Naive thymus-derived CD8-positive, alpha-beta T cell (primary cell): ENCODE measurements at regions of chr2 and their contacts with region 1.

Region 1: GRCh38 chr2:201071479-201072200 is at the starts of genes HYCC2 and NDUFB3:
- DNase-seq: peak; percentile 84 to 97 (median 94)
- ATAC-seq: peak; percentile 93 to 94
- H3K4me3 Mint-ChIP-seq: peak within 1 kb of the TSS; percentile 93 to 99 (median 96)
- H3K27ac Mint-ChIP-seq: peak within 1 kb of the TSS; percentile 94 to 99 (median 98)
- H3K4me1 Mint-ChIP-seq: peaks cover 25 to 58% (median 50%) of the 10 kb centered on the region in 4 donors
- H3K27me3 Mint-ChIP-seq: peaks cover 0 to 2% (median 0%) of the 10 kb centered on the region in 5 donors
- polyA plus RNA-seq, gene HYCC2: 20.8 to 32.5 (median 23.0) TPM
- polyA plus RNA-seq, gene NDUFB3: 279 to 299 (median 298) TPM

Region 2: DNA sequence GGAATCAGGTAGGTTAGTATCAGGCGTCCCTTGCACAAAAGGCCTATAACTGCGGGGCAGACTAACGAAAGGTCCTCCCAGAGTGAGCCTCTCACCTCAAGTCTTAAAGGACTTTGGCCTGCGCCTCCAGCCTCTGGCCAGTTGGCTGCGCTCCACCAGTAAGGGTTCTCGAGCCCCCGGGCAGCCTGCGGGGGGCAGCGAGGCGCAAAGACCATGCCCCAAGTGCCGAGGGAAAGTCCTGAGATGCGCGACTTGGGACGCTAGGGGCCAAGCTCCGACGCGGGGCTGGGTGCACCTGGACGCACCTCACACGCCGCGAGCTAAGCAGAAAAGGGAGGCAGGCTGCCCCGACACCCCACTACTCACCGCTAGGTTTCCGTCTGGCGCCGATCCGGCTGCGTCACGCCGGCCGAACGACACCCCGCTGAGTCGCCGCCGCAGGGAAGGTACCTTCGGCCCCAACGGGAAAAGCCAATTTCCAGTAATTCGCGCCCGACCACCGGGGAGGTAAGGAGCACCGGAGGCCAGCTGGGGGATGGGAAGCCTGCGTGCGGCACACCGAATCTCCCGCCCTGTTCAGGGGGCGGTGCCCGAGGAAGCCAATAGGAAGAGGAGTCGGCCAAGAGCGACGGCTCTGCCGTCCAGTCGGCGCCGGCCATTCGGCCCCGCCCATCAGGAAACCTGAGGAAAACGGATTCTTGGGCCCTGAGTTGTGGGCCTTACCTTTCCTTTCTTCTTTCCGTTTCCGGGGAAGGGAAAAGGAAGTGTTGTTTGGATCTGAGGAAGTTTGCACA is 108.3 kb before region 1 on chr2 and contains the start of gene ORC2:
- POLR2A ChIA-PET with region 1: interaction called, 19 read pairs
- DNase-seq: peak; percentile 85 to 99 (median 92)
- ATAC-seq: peak; percentile 93 to 94
- H3K4me3 Mint-ChIP-seq: peak within 1 kb of the TSS; percentile 95 to 99 (median 98)
- H3K27ac Mint-ChIP-seq: peak within 1 kb of the TSS; percentile 95 to 100 (median 99)
- H3K4me1 Mint-ChIP-seq: peaks cover 35 to 67% (median 60%) of the 10 kb centered on the region in 4 donors
- H3K27me3 Mint-ChIP-seq: no peaks in the 10 kb centered on the region
- polyA plus RNA-seq, gene ORC2: 9.4 to 11.1 (median 9.4) TPM

Region 3: DNA sequence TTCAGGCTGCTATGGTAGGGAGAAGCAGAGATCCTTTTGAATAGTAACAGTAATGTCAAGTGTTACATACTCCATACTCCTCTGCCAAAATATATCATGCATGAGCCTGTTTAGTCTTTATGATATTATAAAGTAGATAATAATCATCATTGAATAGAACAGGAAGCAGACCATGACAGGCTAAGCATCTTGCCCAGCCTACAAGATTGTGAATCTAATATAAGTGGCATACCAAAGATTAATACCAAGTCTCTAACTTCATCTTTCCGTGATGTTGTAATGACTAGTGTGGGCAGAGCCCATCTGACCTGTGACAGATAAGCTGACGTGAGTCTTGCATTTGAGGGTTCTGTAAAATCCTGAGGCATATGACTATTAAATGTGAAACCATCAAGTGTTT is 13.2 kb after region 1 on chr2:
- POLR2A ChIA-PET with region 1: interaction called, 12 read pairs
- DNase-seq: no peak
- ATAC-seq: no peak
- H3K4me3 Mint-ChIP-seq: no peak overlapping the region
- H3K27ac Mint-ChIP-seq: peak overlapping the region in 6 of 10 donors; percentile 1 to 61 (median 32)
- H3K4me1 Mint-ChIP-seq: peaks cover 0 to 13% (median under 1%) of the 10 kb centered on the region in 4 donors
- H3K27me3 Mint-ChIP-seq: no peaks in the 10 kb centered on the region

Region 4: DNA sequence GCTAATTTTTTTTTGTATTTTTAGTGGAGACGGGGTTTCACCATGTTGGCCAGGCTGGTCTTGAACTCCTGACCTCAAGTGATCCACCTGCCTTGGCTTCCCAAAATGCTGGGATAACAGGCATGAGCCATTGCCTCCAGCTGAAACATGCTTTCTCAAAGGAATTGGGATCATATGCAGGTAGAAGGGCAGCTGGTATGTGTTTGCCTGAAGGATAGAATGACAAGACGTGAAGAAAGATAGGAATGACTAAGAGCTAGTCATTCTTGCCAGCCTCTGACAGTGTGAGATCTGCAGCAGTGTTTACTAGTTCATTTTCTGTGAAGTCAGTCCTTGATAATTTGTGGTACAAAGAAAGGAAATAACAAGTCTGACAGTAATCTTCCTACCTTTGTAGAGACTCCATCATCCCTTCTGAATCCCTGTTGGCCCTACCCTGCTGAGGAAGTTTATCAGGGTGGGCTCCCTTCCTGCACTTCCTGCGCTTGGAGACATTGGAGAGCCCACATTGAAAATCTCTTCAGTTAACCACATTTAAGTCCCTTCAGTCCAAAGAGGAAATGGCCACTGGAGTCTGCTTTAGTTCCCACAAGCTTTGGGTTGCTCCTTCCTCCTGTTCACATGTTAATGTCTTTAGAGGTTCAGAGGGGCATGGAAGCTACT is 59.0 kb after region 1 on chr2:
- POLR2A ChIA-PET with region 1: no interaction called
- DNase-seq: peak in 3 of 10 donors; percentile 31 to 54 (median 34)
- ATAC-seq: peak; percentile 61 to 64
- H3K4me3 Mint-ChIP-seq: peak overlapping the region; percentile 36 to 80 (median 60)
- H3K27ac Mint-ChIP-seq: peak overlapping the region; percentile 61 to 97 (median 92)
- H3K4me1 Mint-ChIP-seq: peaks cover 47 to 78% (median 70%) of the 10 kb centered on the region in 4 donors
- H3K27me3 Mint-ChIP-seq: no peaks in the 10 kb centered on the region